ENCODE measurements at regions of chr7 and their contacts with region 1.

Region 1: GRCh38 chr7:38222481-38223096 is 44.5 kb downstream of the STARD3NL start:
- DNase-seq: no peak
- H3K4me3 ChIP-seq: no peak overlapping the region
- H3K27ac ChIP-seq: no peak overlapping the region
- H3K4me1 ChIP-seq: no peaks in the 10 kb centered on the region
- H3K27me3 ChIP-seq: no peaks in the 10 kb centered on the region
- CTCF ChIP-seq: peak in 2 of 3 experiments; percentile 77 to 80; a peak in 3 of 4 replicates
- EP300 ChIP-seq: no peak
- POLR2A ChIP-seq: no peak
- RAD21 ChIP-seq: peak; percentile 87 to 88

Region 2: DNA sequence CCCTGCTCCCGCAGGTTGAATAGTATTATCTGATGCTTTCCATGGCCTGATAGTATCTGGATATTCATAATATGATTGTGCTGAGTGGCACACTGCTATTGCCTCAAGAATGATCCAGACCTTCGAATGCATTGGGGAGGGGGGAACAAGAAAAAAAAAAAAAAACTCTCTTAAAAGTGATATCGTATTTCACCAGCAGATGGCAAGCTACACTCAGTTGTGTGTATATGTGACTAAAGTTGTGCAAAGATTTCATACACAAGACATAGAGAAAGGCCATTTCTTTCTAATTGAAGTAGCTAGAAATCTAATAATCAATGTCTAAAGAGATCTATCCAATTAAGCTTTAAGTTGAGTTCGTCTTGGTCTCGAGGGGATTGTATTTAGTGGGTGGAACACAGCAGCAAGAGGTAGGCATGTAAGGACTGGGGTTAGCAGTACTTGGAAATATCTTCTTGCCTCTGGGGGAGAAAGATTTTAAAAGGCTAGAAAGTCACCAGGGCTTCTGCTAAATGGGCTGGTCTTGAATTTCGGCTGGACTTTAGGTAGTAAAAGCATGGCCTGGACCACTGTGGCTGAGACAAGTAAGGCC is 321.3 kb before region 1 on chr7:
- CTCF ChIA-PET with region 1: interaction called, 15 read pairs
- POLR2A ChIA-PET with region 1: no interaction called
- DNase-seq: no peak
- H3K4me3 ChIP-seq: no peak overlapping the region
- H3K27ac ChIP-seq: no peak overlapping the region
- H3K4me1 ChIP-seq: no peaks in the 10 kb centered on the region
- H3K27me3 ChIP-seq: no peaks in the 10 kb centered on the region
- CTCF ChIP-seq: peak in 2 of 3 experiments; percentile 44 to 55; a peak in 2 of 4 replicates
- EP300 ChIP-seq: no peak
- POLR2A ChIP-seq: no peak
- RAD21 ChIP-seq: peak; percentile 74 to 76

Region 3: GRCh38 chr7:38107486-38107893 is 115.1 kb before region 1 on chr7:
- CTCF ChIA-PET with region 1: interaction called, 51 read pairs
- POLR2A ChIA-PET with region 1: no interaction called
- DNase-seq: peak; percentile 7 to 88
- H3K4me3 ChIP-seq: no peak overlapping the region
- H3K27ac ChIP-seq: no peak overlapping the region
- H3K4me1 ChIP-seq: no peaks in the 10 kb centered on the region
- H3K27me3 ChIP-seq: no peaks in the 10 kb centered on the region
- CTCF ChIP-seq: peak; percentile 50 to 91 (median 83)
- EP300 ChIP-seq: no peak
- POLR2A ChIP-seq: no peak
- RAD21 ChIP-seq: peak; percentile 90 to 91

Region 4: DNA sequence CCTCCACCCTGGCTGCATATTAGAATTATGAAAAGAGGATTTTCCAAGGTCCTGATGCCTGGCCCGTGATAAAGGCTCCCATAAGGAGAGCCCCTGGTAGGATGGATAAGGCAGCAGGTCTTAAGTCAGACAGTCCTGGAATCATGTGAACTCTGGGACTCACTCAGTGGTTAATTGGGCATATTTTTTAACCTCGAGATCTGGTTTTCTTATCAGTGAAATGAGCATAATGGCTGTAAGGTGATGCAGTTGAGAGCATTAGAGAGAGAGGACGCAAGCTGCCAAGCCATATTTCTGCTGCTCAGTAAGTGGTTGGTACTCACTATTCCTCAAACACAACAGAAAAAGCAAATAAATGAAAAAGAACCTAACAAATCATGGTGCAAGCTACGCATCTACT is 13.0 kb after region 1 on chr7:
- CTCF ChIA-PET with region 1: interaction called, 11 read pairs
- POLR2A ChIA-PET with region 1: no interaction called
- DNase-seq: no peak
- H3K4me3 ChIP-seq: no peak overlapping the region
- H3K27ac ChIP-seq: no peak overlapping the region
- H3K4me1 ChIP-seq: no peaks in the 10 kb centered on the region
- H3K27me3 ChIP-seq: no peaks in the 10 kb centered on the region
- CTCF ChIP-seq: no peak
- EP300 ChIP-seq: no peak
- POLR2A ChIP-seq: no peak
- RAD21 ChIP-seq: no peak

Region 5: DNA sequence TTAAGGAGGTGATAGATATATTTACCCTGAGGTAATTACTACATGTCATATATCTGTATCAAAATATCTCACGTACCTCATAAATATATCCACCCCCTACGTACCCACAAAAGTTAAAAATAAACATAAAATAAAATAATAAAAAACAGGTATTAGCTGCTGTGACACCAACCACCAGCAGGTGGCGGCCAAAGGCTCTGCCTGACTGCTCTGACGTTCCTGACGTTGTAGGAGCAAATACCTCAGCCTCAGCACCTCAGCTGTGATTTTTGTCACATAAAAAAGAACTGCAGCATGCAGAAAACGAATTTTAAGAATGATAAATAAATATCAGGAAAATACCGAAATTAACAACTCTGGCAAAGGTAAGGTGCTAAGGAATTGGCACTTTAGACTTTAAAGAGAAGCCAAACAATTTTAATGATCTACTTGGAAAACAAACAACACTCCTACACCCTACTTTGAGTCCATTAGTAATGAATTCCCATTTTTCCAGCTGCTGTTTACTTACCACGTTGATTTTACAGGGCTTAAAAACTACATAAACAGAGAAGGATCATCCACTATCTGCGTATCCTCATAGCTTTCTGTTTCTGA is 176.2 kb after region 1 on chr7:
- CTCF ChIA-PET with region 1: no interaction called
- POLR2A ChIA-PET with region 1: no interaction called
- DNase-seq: peak in 1 of 2 experiments; percentile 59
- H3K4me3 ChIP-seq: no peak overlapping the region
- H3K27ac ChIP-seq: no peak overlapping the region
- H3K4me1 ChIP-seq: no peaks in the 10 kb centered on the region
- H3K27me3 ChIP-seq: no peaks in the 10 kb centered on the region
- CTCF ChIP-seq: peak; percentile 65 to 83 (median 77)
- EP300 ChIP-seq: no peak
- POLR2A ChIP-seq: no peak
- RAD21 ChIP-seq: peak; percentile 74 to 77